Ascending aorta (tissue), 2 donors: ENCODE measurements at regions of chr2 and their contacts with region 1.

Region 1: DNA sequence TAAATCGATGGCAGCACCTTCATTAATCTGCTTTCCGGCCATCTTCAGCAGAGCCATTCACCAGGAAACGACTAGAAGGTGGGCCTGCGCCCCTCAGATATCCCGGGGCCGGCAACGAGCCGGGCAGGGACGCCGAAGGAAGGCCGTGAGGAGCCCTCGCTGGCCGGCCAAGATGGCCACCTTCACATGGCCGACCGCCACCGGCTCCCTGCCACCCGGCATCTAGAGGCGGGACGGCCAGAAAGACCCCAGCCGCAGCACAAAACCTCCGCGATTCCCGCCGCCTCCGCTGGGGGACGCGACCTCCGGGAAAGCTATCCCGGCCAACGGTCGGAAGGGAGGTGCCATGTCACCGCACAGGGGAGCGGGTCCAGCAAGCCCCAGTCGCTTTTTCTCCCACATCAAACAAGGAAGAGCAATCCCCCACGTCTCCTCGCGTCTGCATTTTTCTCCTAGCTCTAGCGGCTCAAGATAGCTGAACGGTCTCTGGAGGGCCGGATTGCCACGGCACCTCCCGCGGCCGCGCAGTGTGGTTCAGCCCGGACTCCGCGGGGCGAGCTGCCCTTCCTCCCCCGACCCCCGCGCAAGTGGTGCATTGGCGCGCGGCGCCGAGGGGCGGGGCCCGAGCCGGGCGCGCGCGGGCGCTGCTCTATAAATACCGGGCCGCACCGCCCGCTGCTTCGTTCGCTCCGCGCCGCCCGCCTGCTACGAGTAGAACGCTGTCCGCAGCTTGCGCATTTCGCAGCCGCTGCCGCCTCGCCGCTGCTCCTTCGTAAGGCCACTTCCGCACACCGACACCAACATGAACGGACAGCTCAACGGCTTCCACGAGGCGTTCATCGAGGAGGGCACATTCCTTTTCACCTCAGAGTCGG is at the start of gene MAT2A:
- DNase-seq: peak; percentile 70 to 97
- H3K4me3 ChIP-seq: peak within 1 kb of the TSS; percentile 82 to 89
- H3K27ac ChIP-seq: peak within 1 kb of the TSS; percentile 98 to 99
- H3K4me1 ChIP-seq: peaks cover 2 to 41% of the 10 kb centered on the region in 2 donors
- H3K27me3 ChIP-seq: no peaks in the 10 kb centered on the region
- CTCF ChIP-seq: peak; percentile 69 to 85 (median 74)
- total RNA-seq, gene MAT2A: 91.7 TPM

Region 2: GRCh38 chr2:85420536-85421259 is 118.0 kb before region 1 on chr2:
- intact Hi-C with region 1: loop called (anchors 1 kb)
- DNase-seq: peak; percentile 52 to 95
- H3K4me3 ChIP-seq: peak overlapping the region in 1 of 2 donors; percentile 32
- H3K27ac ChIP-seq: peak overlapping the region; percentile 30 to 60
- H3K4me1 ChIP-seq: peaks cover 6 to 11% of the 10 kb centered on the region in 2 donors
- H3K27me3 ChIP-seq: no peaks in the 10 kb centered on the region
- CTCF ChIP-seq: peak; percentile 100

Region 3: DNA sequence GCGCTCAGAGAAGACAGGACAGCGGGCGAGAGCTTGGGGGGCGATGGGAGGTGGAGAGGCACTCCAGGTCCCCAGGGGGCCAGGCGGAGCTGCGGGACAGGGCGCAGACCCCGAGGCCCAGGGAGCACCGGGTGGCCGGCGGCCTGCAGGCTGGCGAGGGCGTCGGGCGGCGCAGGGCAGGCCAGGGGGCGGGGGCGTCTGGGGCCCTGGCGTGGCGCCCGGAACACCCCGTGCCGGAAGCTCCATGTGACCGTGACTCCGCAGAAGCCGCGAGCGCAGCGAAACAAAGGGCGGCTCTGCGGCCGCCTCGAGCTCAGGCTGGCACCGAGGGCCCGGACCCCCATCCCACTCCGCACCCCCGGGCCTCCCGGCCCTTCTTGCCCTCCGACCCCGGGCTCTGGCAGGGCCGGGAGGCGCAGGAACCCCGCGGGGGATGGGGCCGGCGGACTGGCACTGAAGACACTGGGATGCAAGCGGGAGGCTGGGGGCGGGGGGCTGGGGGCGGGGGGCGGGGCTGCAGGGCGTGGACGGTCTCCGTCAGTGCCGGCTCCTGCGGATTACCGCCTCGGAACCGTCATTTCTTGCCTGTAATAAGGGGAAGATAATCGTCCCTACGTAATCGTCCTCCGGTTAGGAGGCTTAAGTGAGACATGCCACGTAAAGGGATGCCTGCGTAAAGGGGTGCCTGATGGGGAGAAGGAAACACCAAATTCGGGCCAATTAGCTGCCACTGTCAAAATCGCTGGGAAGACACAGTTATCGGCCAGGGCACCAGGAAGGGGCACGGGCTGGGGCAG is 101.0 kb before region 1 on chr2:
- intact Hi-C with region 1: loop called (anchors 1 kb)
- DNase-seq: peak; percentile 58 to 91
- H3K4me3 ChIP-seq: peak overlapping the region; percentile 53 to 63
- H3K27ac ChIP-seq: peak overlapping the region; percentile 89 to 90
- H3K4me1 ChIP-seq: peaks cover 0 to 23% of the 10 kb centered on the region in 2 donors
- H3K27me3 ChIP-seq: no peaks in the 10 kb centered on the region
- CTCF ChIP-seq: no peak

Region 4: GRCh38 chr2:85504778-85505323 is 33.9 kb before region 1 on chr2:
- intact Hi-C with region 1: loop called (anchors 2 kb)
- DNase-seq: peak; percentile 53 to 85
- H3K4me3 ChIP-seq: no peak overlapping the region
- H3K27ac ChIP-seq: peak overlapping the region; percentile 26 to 39
- H3K4me1 ChIP-seq: peaks cover 0 to 10% of the 10 kb centered on the region in 2 donors
- H3K27me3 ChIP-seq: no peaks in the 10 kb centered on the region
- CTCF ChIP-seq: no peak

Region 5: DNA sequence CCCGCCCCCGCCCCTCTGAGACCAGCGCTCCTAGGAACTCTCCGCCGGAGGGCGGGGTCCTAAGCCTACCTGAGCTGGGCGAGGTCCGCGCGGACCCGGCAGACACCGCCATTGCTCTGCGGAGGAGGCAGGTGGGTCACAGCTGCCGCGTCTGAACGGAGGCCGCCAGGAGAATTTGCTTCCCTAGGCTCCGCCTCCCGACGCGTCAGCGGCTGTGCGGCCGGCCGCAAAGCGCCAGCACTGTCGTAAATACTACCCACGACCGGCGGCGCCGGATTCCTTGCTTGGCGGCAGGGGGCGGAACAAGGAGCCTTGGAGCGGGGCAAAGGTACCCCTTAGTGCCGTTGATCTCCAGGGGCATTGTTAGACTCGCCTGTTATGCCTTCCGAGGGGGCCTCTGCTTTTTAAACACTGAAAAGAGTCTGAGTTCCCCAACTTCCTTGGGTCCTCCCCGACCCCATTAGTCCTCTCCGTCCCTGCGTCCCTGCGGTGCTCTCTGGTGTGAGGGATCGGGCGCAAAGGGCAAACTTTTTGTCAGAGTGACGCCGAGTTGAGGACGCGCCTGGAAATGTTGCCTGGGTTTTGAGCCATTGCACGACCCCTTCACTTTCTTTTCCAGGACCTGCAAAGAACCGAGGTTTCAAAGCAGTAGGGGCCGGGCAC is 22.7 kb after region 1 on chr2 and contains the start of gene GGCX:
- intact Hi-C with region 1: loop called (anchors 2 kb)
- DNase-seq: peak; percentile 82 to 97
- H3K4me3 ChIP-seq: peak within 1 kb of the TSS; percentile 77 to 79
- H3K27ac ChIP-seq: peak within 1 kb of the TSS; percentile 76 to 86
- H3K4me1 ChIP-seq: peaks cover 3 to 16% of the 10 kb centered on the region in 2 donors
- H3K27me3 ChIP-seq: no peaks in the 10 kb centered on the region
- CTCF ChIP-seq: peak in 2 of 3 experiments; percentile 10 to 35
- total RNA-seq, gene GGCX: 31.9 TPM

Region 6: DNA sequence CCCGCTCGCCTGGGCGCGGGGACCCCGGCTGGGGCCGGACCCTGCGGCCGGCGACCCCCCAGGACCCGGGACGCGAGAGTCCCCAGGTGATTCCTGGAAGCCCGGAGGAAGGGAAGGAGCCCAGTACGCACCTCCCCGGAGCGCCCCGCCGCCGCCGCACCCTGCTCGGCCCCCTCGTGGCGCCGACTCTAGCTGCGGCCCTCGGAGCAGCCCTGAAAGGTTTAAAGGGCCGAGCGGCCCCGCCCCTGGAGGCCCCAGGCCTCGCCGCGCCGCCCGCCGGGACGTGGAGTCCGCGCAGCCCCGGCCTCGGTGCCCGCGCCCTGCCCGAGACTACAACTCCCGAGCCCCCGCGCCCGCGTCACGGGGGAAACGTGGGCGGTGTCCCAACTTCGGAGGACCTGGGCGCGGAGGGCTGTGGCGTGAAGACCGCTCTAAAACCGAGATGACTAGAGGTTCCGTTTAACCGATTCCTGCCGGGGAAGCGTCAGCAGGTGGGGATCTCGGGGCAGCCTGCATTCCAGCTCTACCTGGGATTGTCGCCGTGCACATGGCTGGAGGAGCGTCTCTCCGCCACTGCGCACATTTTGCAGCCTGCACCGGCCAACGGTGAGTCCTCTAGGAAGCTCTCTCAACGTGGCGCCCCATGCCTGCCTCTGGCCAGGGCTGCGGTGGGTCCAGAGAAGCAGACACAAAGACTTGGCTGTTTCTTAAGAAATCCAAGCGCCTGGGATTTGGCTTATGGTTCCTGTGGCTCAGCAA is 63.9 kb after region 1 on chr2 and contains the start of gene TMEM150A:
- intact Hi-C with region 1: loop called (anchors 2 kb)
- DNase-seq: peak; percentile 89 to 97
- H3K4me3 ChIP-seq: peak within 1 kb of the TSS; percentile 86 to 87
- H3K27ac ChIP-seq: peak within 1 kb of the TSS; percentile 73 to 88
- H3K4me1 ChIP-seq: peaks cover 10 to 39% of the 10 kb centered on the region in 2 donors
- H3K27me3 ChIP-seq: no peaks in the 10 kb centered on the region
- CTCF ChIP-seq: peak; percentile 15 to 82 (median 36)
- total RNA-seq, gene TMEM150A: 26.7 TPM